Ascending aorta (tissue), 2 donors: ENCODE measurements at regions of chr11 and their contacts with region 1.

Region 1: DNA sequence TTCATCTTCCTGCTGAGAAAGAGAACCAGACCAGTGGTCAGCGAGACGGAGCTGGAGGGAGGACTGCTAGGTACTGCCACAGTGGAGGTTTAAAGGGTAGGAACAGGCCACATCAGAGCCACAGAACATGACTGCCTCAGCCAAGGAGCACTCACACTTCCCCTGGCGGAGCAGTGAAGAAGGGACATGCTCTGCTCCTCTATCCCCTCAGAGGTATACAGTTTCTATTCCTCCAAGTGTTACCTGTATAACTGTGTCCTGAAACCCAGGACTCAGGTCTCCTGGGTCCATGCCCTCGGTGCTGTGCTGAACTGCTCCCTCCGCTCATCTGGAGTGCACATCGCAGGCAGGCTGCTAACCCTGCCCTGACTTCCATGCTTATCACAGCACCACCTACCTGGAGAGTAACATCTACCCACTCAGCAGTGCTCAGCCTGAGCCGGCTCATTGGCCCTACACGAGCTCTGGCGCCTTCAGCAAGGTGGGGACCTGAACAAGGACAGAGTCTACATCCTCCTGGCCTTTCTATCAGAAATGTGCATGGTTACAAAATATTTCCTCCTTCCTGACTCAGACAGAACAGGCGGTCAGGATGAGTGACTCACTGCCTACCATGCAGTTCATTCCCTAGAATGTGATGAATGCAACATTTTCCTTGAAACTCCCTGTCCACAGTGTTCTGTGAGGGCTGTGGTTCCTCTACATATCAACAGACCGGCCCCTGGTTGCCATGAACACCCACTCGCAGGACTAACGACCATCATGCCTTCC is 52.9 kb downstream of the C11orf58 start:
- DNase-seq: peak; percentile 49 to 89
- H3K4me3 ChIP-seq: no peak overlapping the region
- H3K27ac ChIP-seq: peak overlapping the region; percentile 76 to 84
- H3K4me1 ChIP-seq: peaks cover 24 to 36% of the 10 kb centered on the region in 2 donors
- H3K27me3 ChIP-seq: no peaks in the 10 kb centered on the region
- CTCF ChIP-seq: no peak

Region 2: DNA sequence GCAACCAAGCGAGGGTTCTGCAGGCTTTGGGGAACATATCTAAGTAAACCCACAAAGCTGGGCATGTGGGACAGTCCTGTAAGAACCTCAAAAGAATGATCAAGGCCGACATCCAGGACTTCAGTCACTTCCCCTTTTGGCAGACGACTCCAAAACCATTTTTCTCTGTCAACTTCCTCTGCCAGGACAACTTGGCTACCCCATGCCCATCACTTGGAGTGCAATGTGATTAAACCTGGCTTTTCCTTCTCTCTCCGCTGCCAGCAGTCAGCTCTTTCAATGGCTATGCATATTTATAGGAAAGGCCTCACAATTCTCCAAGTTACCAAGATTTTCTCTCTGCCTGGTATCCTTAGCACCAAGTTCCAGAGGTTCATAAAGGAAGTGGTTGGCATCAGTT is 26.0 kb after region 1 on chr11:
- intact Hi-C with region 1: no loop called
- DNase-seq: no peak
- H3K4me3 ChIP-seq: no peak overlapping the region
- H3K27ac ChIP-seq: no peak overlapping the region
- H3K4me1 ChIP-seq: no peaks in the 10 kb centered on the region
- H3K27me3 ChIP-seq: no peaks in the 10 kb centered on the region
- CTCF ChIP-seq: no peak

Region 3: DNA sequence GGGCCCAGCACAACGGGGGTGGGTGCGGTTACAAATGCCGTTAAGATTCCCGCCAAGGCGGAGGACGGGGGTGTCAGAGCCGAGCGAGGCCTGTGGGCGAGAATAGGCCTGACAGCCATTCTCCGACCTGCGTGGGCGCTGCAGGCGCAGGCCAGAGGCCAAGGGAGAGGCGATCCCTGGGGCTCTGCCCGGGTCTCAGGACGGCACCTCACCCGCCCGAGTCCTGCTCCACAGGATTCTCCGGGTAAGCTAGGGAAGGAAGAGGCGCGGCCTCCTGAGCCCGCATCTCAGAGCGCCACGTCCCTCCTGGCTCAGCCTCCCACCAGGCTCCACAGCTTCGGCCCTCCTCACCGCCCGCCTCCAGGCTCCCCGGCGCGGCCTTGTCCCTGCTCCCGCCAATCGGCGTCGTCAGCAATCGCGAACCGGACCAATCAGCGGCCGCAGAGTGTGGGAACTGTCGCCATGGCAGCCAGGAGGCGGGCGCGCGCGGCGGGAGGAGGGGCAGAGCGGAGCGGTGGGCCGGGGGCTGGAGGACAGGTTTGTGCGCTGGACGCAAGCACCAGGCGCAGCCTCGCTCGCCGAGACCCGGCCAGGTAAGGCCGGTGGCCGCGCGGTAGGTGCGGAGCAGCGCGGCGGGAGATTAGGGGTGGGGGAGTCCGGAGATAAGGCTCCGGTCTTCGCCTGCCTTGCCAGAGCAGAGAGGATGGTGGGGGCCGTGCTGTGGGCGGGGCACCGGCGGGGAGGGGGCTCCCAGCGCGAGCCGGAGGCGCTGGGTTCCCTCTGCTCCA is 485.1 kb after region 1 on chr11 and contains the start of gene NUCB2:
- intact Hi-C with region 1: loop called (anchors 2 kb)
- DNase-seq: peak; percentile 88 to 97
- H3K4me3 ChIP-seq: peak within 1 kb of the TSS; percentile 78 to 85
- H3K27ac ChIP-seq: peak within 1 kb of the TSS; percentile 86 to 92
- H3K4me1 ChIP-seq: peaks cover 0 to 5% of the 10 kb centered on the region in 2 donors
- H3K27me3 ChIP-seq: no peaks in the 10 kb centered on the region
- CTCF ChIP-seq: no peak
- total RNA-seq, gene NUCB2: 47.8 TPM